IMR-90 (cell line): ENCODE measurements at regions of chr9 and their contacts with region 1.

Region 1: GRCh38 chr9:137564817-137565411 is 13.2 kb downstream of the MRPL41 start:
- DNase-seq: no peak
- ATAC-seq: no peak
- H3K4me3 ChIP-seq: no peak overlapping the region
- H3K27ac ChIP-seq: no peak overlapping the region
- H3K4me1 ChIP-seq: no peaks in the 10 kb centered on the region
- H3K27me3 ChIP-seq: no peaks in the 10 kb centered on the region
- CTCF ChIP-seq: no peak
- POLR2A ChIP-seq: no peak
- RAD21 ChIP-seq: no peak

Region 2: GRCh38 chr9:137590462-137591383 is 25.8 kb after region 1 on chr9 and contains the start of gene ZMYND19:
- CTCF ChIA-PET with region 1: interaction called, 11 read pairs
- POLR2A ChIA-PET with region 1: no interaction called
- dilution Hi-C with region 1: no loop called
- in situ Hi-C with region 1: no loop called
- intact Hi-C with region 1: no loop called
- DNase-seq: peak; percentile 81
- ATAC-seq: peak; percentile 98
- H3K4me3 ChIP-seq: peak within 1 kb of the TSS; percentile 100
- H3K27ac ChIP-seq: peak within 1 kb of the TSS; percentile 69; the same call in 1 of the 2 replicates
- H3K4me1 ChIP-seq: peaks cover 7% of the 10 kb centered on the region
- H3K27me3 ChIP-seq: no peaks in the 10 kb centered on the region
- CTCF ChIP-seq: 0 out of 2 replicates have a peak, but pooled peaks have one; percentile 2
- POLR2A ChIP-seq: peak; percentile 45; the same call in 1 of the 2 replicates
- RAD21 ChIP-seq: no peak
- total RNA-seq, gene ZMYND19: 14.3 and 16.4 TPM in 2 replicates

Region 3: DNA sequence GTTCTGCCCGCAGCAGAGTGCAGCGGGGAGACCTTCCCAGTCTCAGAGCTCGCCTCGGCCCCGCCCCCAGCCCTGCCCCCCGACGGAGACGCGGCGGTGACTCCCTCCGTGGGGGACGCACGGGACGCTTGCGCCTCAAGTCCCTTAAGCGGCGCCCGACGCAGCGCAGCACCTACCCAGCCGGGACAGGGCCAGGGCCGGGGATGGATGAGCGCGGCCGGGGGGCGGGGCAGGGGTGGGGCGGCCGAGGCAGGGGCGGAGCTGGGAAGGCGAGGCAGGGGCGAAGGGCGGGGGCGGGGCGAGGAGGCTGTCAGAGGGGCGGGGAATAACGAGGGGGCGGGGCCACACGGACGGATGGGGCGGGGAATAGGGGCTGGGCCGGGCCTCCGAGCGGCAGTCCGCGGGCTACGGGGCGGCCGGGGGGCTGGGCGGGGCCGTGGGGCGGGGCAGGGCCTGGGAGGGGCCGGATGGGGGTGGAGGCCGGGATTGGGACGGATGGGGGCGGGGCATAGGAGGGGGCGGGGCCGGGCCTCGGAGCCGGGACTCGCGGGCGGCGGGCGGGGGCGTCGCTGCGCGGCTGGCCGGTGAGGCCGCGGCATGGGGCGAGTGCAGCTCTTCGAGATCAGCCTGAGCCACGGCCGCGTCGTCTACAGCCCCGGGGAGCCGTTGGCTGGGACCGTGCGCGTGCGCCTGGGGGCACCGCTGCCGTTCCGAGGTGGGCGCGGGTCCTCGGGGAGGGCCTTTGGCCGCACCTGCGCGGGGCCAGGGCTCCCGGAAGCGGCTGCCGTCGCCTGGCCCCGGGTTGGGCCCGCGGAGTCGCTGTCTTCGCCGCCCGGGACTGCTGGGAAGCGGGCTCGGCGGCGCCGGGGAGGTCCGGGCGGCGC is 40.4 kb after region 1 on chr9 and contains the start of gene ARRDC1:
- CTCF ChIA-PET with region 1: no interaction called
- POLR2A ChIA-PET with region 1: no interaction called
- dilution Hi-C with region 1: no loop called
- in situ Hi-C with region 1: no loop called
- intact Hi-C with region 1: no loop called
- DNase-seq: peak; percentile 85
- ATAC-seq: peak; percentile 84
- H3K4me3 ChIP-seq: peak within 1 kb of the TSS; percentile 84
- H3K27ac ChIP-seq: peak within 1 kb of the TSS; percentile 54; the same call in 1 of the 2 replicates
- H3K4me1 ChIP-seq: peaks cover 15% of the 10 kb centered on the region
- H3K27me3 ChIP-seq: peaks cover 5% of the 10 kb centered on the region; the same call in 1 of the 2 replicates
- CTCF ChIP-seq: no peak
- POLR2A ChIP-seq: peak; percentile 49; the same call in 1 of the 2 replicates
- RAD21 ChIP-seq: no peak
- total RNA-seq, gene ARRDC1: 7.7 and 7.8 TPM in 2 replicates